ENCODE measurements at regions of chr6 and their contacts with region 1.

Region 1: DNA sequence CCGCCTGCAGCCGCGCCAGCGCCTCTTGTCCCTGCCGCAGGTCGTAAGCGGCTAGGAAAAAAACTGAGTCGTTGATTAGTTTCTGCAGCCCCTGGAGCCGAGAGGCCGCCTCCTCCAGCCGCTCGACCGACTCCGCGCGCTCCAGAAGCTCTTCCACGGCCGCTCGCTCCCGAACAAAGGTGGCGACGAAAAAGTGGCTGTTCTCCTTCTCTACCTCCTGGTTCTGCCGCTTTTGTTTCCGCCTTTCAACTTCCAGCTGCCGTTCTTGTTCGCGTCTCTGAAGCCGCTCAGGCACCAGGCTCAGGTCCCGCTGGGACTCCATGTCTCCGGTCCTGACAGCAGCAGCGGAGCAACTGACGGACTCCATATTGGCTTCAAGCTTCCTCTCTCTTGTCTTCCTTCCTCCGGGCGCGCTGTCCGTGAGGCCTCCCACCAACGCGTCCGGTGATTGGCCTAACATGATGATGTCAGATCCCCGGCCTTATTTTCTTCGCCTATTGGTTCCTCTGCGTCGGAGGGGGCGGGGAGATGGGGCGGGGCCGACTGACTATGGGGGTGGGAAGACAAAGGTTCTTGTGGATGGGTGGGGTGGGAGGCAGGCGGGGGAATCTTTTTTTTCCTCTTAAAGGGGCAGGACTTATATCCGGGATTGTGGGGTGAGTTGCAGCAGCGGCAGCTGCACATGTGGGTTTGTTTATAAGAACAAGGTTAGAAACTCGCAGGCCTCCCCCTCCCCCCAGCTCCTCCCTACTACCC is at the start of gene TBCC:
- DNase-seq: peak; percentile 99
- ATAC-seq: peak; percentile 79
- H3K4me3 ChIP-seq: peak within 1 kb of the TSS; percentile 68
- H3K27ac ChIP-seq: peak within 1 kb of the TSS; percentile 99
- H3K4me1 ChIP-seq: peaks cover 8% of the 10 kb centered on the region
- H3K27me3 ChIP-seq: no peaks in the 10 kb centered on the region
- CTCF ChIP-seq: no peak
- POLR2A ChIP-seq: peak; percentile 97
- RAD21 ChIP-seq: no peak
- total RNA-seq, gene TBCC: 32.6 and 33.9 TPM in 2 replicates

Region 2: DNA sequence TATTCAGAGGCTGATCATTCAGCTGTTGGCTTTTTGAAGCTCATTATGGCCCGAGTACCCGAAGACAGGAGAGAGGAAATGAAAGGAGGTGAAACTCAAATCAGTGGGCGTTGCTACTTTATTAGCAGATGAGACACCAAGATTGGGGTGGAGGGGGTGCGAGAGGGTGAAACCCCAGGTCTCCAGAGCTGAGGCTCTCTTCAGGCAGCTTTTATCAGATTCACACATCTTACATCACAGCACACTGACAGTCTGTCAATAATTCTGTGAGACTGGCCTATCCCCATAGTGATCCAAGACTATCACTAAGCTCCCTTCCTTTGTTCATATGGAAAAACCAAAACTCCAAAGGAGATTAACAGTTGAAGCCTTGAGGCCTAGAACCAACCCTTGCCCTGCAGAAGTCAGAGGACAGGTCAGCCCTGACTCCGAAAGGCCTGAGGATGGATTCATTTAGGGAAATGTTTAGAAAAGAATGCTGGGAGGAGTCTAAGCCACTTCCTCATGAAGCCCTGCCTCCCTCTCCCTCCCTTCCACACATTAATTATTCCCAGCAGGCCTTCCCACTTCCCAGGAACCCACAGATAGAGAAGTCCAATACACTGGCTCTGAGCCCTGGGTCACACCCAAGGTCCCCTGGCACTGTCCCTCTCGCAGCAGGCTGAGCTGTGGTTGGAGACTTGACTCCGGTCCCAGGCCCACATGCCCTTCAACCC is 317.4 kb before region 1 on chr6:
- CTCF ChIA-PET with region 1: no interaction called
- POLR2A ChIA-PET with region 1: no interaction called
- dilution Hi-C with region 1: no loop called
- in situ Hi-C with region 1: no loop called
- intact Hi-C with region 1: no loop called
- DNase-seq: peak; percentile 21
- ATAC-seq: peak; percentile 84
- H3K4me3 ChIP-seq: no peak overlapping the region
- H3K27ac ChIP-seq: peak overlapping the region; percentile 27; the same call in 1 of the 2 replicates
- H3K4me1 ChIP-seq: peaks cover 13% of the 10 kb centered on the region
- H3K27me3 ChIP-seq: no peaks in the 10 kb centered on the region
- CTCF ChIP-seq: no peak
- POLR2A ChIP-seq: no peak
- RAD21 ChIP-seq: no peak

Region 3: DNA sequence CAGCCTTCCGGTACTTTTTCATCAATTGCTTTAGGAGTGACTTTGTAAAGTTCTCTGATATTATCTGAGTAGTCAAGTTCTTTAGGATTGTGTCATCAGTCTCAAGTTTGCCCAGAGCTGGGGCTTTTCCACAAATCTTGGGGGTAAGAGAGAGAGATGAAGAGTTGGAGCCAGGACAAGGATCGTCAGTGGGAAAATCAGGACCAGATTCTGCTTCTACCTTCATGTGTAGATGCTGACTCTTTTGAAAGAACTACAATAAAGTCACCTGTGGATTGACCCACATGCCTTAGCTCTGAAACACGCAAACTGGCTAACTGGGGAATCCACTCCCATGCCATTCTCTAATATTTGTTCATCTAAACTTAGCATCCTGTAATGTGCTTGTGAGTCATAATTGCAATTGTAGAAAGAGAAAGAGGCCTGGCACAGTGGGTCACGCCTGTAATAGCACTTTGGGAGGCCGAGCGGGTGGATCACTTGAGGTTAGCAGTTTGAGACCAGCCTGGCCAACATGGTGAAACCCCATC is 20.3 kb after region 1 on chr6:
- CTCF ChIA-PET with region 1: interaction called, 3 read pairs
- POLR2A ChIA-PET with region 1: interaction called, 13 read pairs
- dilution Hi-C with region 1: no loop called
- in situ Hi-C with region 1: no loop called
- intact Hi-C with region 1: no loop called
- DNase-seq: peak; percentile 81
- ATAC-seq: peak; percentile 83
- H3K4me3 ChIP-seq: no peak overlapping the region
- H3K27ac ChIP-seq: no peak overlapping the region
- H3K4me1 ChIP-seq: peaks cover 5% of the 10 kb centered on the region; the same call in 1 of the 2 replicates
- H3K27me3 ChIP-seq: no peaks in the 10 kb centered on the region
- CTCF ChIP-seq: no peak
- POLR2A ChIP-seq: no peak
- RAD21 ChIP-seq: no peak

Region 4: DNA sequence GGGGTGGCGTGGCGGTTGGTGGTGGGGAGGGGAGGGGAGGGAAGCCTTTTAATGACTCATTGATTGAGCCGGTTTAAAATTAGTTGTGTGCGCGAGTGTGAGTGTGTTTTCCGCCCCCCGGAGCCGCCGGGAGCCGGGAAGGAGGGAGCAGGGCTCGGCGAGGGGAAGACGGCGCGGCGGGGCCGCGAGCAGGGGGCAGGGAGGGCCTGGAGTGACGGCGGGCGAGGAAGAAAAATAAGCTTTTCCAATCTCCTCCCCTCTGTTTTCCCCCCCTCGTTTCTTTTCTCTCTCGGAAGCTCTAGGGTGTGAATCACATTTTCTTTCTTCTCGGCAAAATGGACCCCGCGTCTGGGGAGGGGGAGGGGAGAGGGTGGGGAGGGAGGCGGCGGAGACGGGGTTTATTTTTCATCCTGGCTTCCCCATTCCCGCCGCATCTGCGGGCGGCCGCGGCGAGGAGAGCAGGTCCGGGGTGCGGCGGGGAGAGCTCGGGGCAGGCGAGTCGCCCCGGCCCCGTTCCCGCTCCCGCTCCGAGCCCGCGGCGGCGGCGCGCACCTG is 36.8 kb after region 1 on chr6:
- CTCF ChIA-PET with region 1: interaction called, 5 read pairs
- POLR2A ChIA-PET with region 1: interaction called, 19 read pairs
- dilution Hi-C with region 1: no loop called
- in situ Hi-C with region 1: no loop called
- intact Hi-C with region 1: loop called (anchors 1 kb)
- DNase-seq: peak; percentile 90
- ATAC-seq: peak; percentile 84
- H3K4me3 ChIP-seq: peak overlapping the region; percentile 96
- H3K27ac ChIP-seq: peak overlapping the region; percentile 98
- H3K4me1 ChIP-seq: peaks cover 7% of the 10 kb centered on the region
- H3K27me3 ChIP-seq: no peaks in the 10 kb centered on the region
- CTCF ChIP-seq: no peak
- POLR2A ChIP-seq: peak; percentile 79; the same call in 1 of the 2 replicates
- RAD21 ChIP-seq: 0 out of 2 replicates have a peak, but pooled peaks have one; percentile 15

Region 5: DNA sequence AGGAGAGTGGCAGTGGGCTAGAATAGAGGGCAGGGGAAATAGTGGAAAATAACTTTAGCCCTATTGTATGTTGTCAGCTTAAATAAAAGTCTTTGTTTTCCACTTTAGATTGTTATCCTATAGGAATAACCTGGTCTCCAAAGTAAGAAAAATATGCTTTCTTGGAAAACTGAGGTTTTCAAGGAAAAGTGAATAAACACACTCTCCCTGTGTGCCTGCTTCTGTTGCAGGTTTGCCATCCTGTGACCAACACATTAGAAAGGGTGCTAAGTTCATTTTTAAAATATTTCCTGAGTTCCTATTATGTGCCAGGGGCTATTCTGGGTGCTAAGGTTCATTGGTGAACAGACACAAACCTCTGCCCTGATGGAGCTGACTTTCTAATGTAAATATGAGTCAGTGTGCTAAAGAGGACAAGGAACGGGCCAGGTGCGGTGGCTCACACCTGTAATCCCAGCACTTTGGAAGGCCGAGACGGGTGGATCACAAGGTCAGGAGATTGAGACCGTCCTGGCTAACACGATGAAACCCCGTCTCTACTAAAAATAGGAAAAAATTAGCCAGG is 59.5 kb after region 1 on chr6:
- CTCF ChIA-PET with region 1: no interaction called
- POLR2A ChIA-PET with region 1: no interaction called
- dilution Hi-C with region 1: no loop called
- in situ Hi-C with region 1: no loop called
- intact Hi-C with region 1: loop called (anchors 1 kb)
- DNase-seq: no peak
- ATAC-seq: no peak
- H3K4me3 ChIP-seq: no peak overlapping the region
- H3K27ac ChIP-seq: no peak overlapping the region
- H3K4me1 ChIP-seq: peaks cover 4% of the 10 kb centered on the region; the same call in 1 of the 2 replicates
- H3K27me3 ChIP-seq: no peaks in the 10 kb centered on the region
- CTCF ChIP-seq: no peak
- POLR2A ChIP-seq: no peak
- RAD21 ChIP-seq: no peak